ENCODE measurements at regions of chr17 and their contacts with region 1.

Region 1: DNA sequence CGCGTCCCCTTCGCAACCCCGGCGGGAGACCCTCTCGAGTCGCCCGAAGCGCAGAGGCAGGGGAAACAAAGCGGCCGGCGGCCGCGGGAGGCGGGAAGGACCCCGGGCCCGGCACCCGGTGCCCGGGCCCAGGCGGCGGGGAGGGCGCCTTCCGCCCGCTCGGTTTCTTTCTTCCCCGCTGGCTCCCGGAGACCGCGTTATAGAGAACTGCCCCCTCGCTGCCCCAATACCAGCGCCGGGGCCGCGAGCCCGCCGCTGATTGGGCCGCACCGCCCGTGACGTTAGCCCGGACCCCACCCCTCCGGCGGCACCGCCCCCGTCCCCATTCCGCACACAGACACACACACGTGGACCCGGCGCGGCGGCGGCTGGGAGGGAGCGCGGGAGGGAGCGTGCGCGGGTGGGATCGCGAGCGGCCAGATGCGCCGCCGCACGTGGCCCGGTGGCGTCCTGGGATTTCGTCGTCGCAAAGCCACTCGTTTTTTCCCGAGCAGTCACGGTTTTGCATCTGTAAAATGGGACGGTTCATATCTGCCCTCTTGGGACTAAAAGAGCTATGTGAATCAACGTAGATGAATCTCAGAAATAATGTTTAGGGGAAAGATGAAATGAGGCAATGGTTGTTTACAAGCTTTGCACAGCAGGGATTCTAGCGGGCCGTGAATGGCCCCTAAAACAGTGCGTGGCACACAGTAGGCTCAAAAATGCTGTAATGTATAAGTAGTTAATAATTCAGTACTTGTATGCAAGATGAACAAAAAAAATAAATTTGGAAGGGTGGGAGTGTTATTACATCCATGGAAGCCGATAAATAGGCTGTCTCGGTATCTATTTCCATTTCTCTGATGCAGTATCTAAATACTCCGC is at the start of gene EPOP:
- DNase-seq: peak; percentile 69 to 99 (median 92)

Region 2: DNA sequence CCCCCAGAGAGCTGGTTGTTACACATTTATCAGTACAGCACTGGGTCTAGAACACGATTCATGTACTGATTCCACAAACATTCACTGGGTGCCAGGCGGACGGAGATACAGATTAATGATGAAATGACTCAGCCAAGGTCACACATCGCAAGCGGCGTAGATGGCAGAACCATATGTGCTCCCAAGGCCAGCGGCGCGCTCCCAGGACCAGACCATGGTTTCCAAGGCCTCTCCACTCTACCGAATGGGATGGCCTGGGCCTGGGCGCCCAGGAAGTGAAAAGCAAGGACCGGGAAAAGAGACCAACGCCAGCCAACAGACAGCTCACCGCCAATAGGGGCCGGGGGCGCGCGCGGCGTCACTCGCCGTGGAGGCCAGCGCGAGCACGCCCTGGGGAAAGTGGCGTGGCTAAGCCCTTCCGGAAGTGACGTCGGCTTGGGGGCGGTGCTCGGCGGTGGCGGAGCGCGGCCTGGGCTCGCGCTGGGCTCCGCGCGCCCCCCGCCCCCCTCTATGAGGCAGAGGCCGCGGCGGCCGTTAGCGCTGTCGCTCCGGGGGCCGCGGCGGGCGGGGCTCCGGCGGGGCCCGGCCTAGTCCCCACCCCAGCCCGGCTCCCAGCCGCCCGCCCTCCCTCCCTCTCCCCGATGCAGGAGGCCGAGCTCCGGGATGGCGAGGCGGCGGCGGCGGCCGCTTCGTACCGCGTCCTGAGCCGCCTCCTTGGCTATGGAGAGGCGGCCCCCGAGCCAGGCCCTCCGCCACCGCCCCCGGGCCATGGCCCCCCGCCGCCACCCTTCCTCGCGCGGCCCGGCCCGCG is 323.4 kb before region 1 on chr17 and contains the start of gene SOCS7:
- intact Hi-C with region 1: loop called (anchors 5 kb)
- DNase-seq: peak; percentile 87 to 99 (median 94)

Region 3: DNA sequence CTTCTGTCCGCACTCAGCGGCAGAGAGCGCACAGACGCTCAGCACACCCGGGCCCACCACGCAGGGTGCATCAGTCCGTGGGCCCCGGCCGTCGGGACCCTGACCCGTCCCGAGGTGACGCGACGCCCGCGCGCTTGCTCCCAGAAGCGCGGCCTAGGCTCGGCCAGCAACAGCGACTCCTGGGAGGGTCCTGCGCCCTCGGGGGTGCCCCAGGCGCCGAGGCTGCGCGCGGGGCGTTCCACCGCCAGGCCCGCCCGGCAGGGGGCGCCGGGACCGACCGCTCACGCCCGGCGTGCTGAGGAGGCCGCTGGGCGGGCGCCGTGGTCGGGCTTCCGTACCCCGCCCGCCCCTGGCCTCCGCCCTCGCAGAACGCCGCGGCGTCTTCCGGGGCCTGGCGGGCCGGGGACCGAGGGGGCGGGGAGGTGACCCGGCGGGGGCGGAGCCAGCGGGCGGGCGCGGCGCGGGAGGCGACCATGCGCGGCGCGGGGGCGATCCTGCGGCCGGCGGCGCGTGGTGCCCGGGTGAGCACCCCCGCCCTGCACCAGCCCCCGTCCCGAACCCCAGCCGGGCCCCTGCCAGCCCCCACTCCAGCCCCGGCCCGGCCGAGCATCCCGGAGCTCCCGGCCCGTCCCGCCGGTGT is 55.0 kb after region 1 on chr17 and contains the start of gene CISD3:
- intact Hi-C with region 1: loop called (anchors 1 kb)
- DNase-seq: peak; percentile 63 to 97 (median 70)

Region 4: GRCh38 chr17:38735161-38735997 is 60.4 kb after region 1 on chr17:
- intact Hi-C with region 1: loop called (anchors 1 kb)
- DNase-seq: peak in 9 of 10 donors; percentile 62 to 96 (median 73)

Region 5: DNA sequence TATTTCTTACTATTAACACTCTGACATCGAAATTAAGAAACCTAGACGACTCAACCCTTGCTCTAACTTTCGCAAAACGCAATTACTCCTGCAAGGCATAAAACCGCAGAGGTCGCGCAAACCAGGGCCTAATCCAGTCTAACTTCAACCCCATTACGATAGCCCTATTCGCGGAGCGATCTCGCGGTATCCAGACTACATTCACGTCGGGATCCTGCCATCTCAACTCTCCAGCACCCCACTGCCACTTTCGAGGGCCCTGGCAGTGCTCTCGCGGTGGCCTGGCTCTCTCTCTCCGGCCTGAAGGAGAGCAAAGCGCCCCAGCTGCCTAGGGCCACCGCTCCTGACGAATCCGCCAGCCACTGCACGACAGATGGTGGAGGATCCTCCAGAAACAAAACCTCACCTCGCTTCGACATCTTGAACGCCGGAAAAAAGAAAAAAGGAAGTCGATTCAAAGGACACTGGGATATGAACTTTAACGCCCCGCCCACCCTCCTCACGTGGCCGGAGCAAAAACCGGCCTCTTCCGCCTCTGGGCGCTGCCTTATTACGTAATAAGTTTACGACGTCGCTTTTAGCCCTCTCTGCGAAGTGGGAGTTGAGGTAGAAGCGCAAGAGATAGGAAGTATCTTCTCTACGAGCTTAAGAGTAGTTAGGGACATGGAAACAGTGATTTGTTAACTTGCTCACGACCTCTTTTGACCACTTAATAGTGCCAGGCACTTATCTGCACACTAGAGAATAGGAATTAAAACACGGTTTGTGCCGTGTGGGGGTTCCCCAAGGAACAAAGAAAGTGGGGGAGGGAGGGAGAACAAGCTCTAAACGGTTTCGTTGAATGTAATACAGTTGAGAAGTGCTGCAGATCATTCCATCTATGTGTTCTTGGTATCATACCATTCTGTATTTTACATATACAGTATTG is 178.6 kb after region 1 on chr17 and contains the start of gene RPL23:
- intact Hi-C with region 1: no loop called
- DNase-seq: peak; percentile 84 to 99 (median 91)